A673 (cell line): ENCODE measurements at regions of chr2 and their contacts with region 1.

Region 1: DNA sequence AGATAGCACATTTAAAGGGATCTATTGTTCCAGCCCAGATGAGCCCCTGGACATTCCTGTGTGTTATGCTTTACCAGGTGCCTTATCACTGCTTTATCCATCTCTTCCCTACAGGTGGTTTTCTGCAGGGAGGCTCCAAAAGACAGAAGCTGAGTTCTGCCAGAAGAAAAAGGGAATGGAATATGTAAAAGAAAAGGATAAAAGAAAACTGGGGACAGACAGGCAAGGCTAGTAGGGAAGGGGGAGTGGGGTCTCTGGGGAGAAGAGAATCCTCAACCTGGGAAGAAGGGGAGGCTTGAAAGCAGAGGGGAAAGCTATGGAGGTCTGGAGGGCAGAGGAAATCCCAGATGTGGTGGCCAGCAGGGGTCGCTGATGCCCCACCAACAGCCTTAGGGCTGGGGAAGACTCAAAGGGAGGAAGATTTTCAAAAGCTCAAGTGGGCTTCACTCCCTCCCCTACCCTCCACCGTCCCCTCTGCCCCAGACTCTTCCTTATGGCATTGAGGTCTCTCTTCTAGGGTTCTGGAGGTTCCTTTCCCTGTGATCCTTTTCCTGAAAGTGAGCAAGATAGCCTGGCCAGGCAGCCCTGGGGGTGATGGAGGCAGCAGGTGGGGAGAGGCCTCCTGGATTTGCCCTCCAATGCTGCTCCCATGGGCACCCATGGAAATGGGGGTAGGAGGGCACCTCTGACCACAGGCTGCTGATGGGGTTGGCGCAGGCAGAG is 178.1 kb upstream of the PKDCC start:
- DNase-seq: peak; percentile 83
- H3K4me3 ChIP-seq: no peak overlapping the region
- H3K27ac ChIP-seq: peak overlapping the region; percentile 43
- H3K4me1 ChIP-seq: peaks cover 39% of the 10 kb centered on the region
- H3K27me3 ChIP-seq: no peaks in the 10 kb centered on the region
- CTCF ChIP-seq: peak; percentile 85

Region 2: DNA sequence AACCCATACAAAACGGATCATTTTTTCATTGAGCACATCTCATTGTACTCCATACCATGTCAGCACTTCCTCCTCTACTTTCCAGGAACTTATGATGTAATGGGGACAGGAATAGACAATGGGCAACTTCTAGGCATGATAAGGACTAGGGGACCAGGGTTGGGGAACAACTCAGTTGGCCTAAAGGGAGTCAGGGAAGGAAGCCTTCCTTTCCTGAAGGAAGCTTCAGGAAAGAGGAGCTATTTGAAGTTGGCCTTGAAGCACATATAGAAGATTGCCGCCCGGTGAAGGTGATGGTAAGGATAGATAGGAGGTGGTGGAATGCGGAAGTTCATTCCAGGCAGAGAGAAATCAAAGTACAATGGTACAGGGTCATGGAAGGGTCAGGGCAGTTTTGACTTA is 1701.7 kb before region 1 on chr2:
- CTCF ChIA-PET with region 1: no interaction called
- POLR2A ChIA-PET with region 1: no interaction called
- intact Hi-C with region 1: no loop called
- DNase-seq: no peak
- H3K4me3 ChIP-seq: no peak overlapping the region
- H3K27ac ChIP-seq: no peak overlapping the region
- H3K4me1 ChIP-seq: no peaks in the 10 kb centered on the region
- H3K27me3 ChIP-seq: peaks cover 22% of the 10 kb centered on the region
- CTCF ChIP-seq: no peak

Region 3: GRCh38 chr2:41527525-41528323 is 342.0 kb before region 1 on chr2:
- CTCF ChIA-PET with region 1: no interaction called
- POLR2A ChIA-PET with region 1: no interaction called
- intact Hi-C with region 1: no loop called
- DNase-seq: no peak
- H3K4me3 ChIP-seq: no peak overlapping the region
- H3K27ac ChIP-seq: no peak overlapping the region
- H3K4me1 ChIP-seq: peaks cover 10% of the 10 kb centered on the region
- H3K27me3 ChIP-seq: no peaks in the 10 kb centered on the region
- CTCF ChIP-seq: no peak

Region 4: DNA sequence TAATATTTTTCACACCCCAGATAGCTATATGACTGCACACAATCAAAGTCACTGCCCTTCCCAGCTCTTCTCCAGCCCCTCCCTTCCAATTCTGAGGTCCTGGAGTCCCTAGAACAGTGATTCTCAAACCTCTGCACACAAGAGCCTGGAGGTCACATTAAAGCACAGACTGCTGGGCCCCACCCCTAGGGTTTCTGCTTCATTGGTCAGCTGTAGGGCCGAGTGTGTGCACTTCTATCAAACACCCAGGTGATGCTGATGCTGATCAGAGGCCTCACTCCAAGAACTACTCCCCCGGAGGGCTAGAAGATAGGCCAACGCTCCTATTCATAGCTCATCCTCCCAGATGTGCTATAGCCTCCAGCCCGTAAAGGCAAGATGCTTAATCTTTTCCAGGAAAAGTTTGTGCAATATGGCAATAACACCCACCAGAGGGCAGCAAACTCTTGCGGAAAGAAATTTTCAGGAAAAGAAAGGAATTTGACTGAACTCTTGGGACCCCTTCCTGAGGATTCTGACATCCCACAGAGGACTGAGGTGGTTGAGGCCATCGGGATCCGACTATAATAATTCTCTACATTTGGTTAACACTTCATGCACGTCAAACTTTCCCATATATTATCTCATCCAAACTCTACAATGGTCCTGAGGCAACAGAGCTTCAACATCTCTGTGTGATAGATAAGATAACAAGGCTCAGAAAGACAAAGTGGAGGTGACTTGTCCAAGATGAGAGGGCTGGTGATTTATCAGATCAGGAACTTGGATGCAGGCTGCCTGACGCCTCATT is 16.1 kb before region 1 on chr2:
- CTCF ChIA-PET with region 1: interaction called, 24 read pairs
- POLR2A ChIA-PET with region 1: no interaction called
- intact Hi-C with region 1: no loop called
- DNase-seq: peak; percentile 82
- H3K4me3 ChIP-seq: no peak overlapping the region
- H3K27ac ChIP-seq: no peak overlapping the region
- H3K4me1 ChIP-seq: no peaks in the 10 kb centered on the region
- H3K27me3 ChIP-seq: no peaks in the 10 kb centered on the region
- CTCF ChIP-seq: peak; percentile 81

Region 5: GRCh38 chr2:41981417-41981816 is 111.7 kb after region 1 on chr2:
- CTCF ChIA-PET with region 1: interaction called, 3 read pairs
- POLR2A ChIA-PET with region 1: no interaction called
- intact Hi-C with region 1: loop called (anchors 5 kb)
- DNase-seq: peak; percentile 59
- H3K4me3 ChIP-seq: no peak overlapping the region
- H3K27ac ChIP-seq: peak overlapping the region; percentile 62
- H3K4me1 ChIP-seq: peaks cover 20% of the 10 kb centered on the region
- H3K27me3 ChIP-seq: no peaks in the 10 kb centered on the region
- CTCF ChIP-seq: no peak

Region 6: DNA sequence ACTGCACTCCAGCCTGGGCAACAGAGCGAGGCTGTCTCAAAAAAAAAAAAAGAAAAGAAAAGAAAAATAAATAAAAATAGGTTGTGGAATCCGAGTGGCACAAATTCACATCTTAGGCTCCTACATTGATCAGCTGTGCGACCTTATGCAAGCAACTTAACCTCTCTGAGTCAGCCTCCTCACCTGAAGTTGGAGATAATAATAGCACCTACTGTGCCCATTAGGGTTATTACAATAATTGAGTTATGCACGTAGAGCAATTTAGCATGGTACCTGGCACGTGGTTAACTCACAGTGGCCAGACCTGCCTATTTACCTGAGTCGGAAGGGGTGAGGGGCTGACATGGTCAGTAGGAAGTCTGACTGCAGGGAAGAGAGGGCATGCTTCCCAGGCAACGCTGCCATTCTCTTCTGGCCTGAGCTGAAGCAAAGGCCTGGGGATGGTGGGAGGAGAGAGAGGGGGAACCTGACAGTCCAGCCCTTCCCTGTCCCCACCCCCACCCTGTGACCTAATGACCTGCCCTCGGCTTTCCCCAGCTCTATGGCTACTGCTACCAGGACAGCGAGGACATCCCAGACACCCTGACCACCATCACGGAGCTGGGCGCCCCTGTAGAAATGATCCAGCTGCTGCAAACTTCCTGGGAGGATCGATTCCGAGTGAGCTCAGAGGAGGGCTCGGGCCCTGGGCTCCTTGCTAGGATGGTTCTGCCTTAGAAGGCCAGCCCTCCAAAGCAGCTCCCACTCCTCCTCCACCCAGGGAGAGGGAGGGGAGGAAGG is 183.2 kb after region 1 on chr2:
- CTCF ChIA-PET with region 1: interaction called, 11 read pairs
- POLR2A ChIA-PET with region 1: no interaction called
- intact Hi-C with region 1: no loop called
- DNase-seq: no peak
- H3K4me3 ChIP-seq: no peak overlapping the region
- H3K27ac ChIP-seq: peak overlapping the region; percentile 17
- H3K4me1 ChIP-seq: peaks cover 15% of the 10 kb centered on the region
- H3K27me3 ChIP-seq: no peaks in the 10 kb centered on the region
- CTCF ChIP-seq: no peak

Region 7: GRCh38 chr2:42328148-42328833 is 458.6 kb after region 1 on chr2:
- CTCF ChIA-PET with region 1: interaction called, 7 read pairs
- POLR2A ChIA-PET with region 1: no interaction called
- intact Hi-C with region 1: loop called (anchors 5 kb)
- DNase-seq: peak; percentile 56
- H3K4me3 ChIP-seq: no peak overlapping the region
- H3K27ac ChIP-seq: no peak overlapping the region
- H3K4me1 ChIP-seq: peaks cover 11% of the 10 kb centered on the region
- H3K27me3 ChIP-seq: no peaks in the 10 kb centered on the region
- CTCF ChIP-seq: peak; percentile 63